Esophagus muscularis mucosa (tissue), 4 donors: ENCODE measurements at regions of chr4 and their contacts with region 1.

Region 1: DNA sequence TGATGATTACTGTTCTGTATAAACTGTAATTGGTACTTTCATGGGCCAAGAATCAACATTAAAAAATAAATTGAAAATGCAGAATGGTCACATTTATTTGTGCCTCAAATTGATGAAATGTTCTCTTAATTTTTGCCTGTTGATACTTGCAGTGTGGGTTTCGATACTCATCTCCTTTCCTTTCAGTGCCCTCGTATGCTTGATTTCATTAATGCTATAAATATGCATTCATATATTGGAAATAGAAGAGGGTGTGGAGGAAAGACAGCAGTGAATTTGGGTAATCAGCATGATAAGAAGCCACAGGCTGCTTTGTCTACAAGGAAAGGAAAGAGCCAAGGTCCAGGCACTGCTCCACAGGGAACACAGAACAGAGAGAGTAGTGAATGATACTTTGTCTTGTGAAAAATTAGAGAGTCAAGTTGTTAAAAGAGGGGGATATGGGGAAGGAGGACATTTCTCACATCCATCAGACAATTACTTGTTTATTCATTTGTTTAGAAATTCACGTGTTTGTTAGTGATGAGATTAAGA is 1.0 kb upstream of the DDX60 start:
- DNase-seq: no peak
- H3K4me3 ChIP-seq: peak overlapping the region; percentile 68 to 90 (median 77)
- H3K27ac ChIP-seq: peak overlapping the region; percentile 5 to 93 (median 90)
- H3K4me1 ChIP-seq: peaks cover 7 to 25% (median 18%) of the 10 kb centered on the region in 4 donors
- H3K27me3 ChIP-seq: no peaks in the 10 kb centered on the region
- CTCF ChIP-seq: no peak
- EP300 ChIP-seq: no peak
- POLR2A ChIP-seq: no peak

Region 2: GRCh38 chr4:168162604-168163003 is 156.9 kb before region 1 on chr4:
- intact Hi-C with region 1: no loop called
- DNase-seq: no peak
- H3K4me3 ChIP-seq: no peak overlapping the region
- H3K27ac ChIP-seq: no peak overlapping the region
- H3K4me1 ChIP-seq: no peaks in the 10 kb centered on the region
- H3K27me3 ChIP-seq: no peaks in the 10 kb centered on the region
- CTCF ChIP-seq: no peak
- EP300 ChIP-seq: no peak
- POLR2A ChIP-seq: no peak

Region 3: DNA sequence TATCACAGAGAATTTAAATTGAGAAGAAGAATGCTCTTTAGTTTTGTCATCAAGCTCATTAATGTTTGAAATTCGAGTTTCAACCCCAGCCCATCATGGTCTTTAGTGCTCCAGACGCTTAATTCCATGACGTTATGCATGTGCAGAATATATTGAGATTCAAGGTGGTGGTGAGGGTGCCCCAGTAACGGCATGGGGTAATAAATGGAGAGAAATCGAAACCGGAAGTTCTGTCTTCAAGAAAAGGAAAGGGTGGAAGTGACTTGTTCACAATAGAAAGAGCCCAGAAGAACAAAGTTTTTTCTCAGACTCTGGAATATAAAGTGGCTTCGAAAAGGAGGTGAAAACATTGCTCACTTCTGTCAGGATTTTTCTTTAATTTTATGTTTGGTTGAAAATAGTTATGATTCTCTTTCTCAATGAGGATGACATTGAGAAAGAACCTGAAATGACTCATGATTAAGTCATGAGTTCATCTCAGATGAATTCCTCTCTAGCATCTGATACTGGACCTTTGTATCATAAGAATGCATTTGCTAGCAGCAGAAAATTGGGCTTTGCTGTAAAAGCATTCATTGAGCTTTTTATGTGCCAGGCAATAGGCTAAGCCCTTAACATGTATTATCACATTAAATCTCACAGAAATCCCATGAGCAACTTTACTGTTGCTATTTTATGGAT is 161.5 kb after region 1 on chr4:
- intact Hi-C with region 1: loop called (anchors 10 kb)
- DNase-seq: no peak
- H3K4me3 ChIP-seq: peak overlapping the region; percentile 68 to 83 (median 76)
- H3K27ac ChIP-seq: peak overlapping the region; percentile 89 to 94 (median 92)
- H3K4me1 ChIP-seq: peaks cover 9 to 16% (median 14%) of the 10 kb centered on the region in 4 donors
- H3K27me3 ChIP-seq: no peaks in the 10 kb centered on the region
- CTCF ChIP-seq: no peak
- EP300 ChIP-seq: no peak
- POLR2A ChIP-seq: no peak

Region 4: GRCh38 chr4:168496834-168497233 is 177.3 kb after region 1 on chr4 and contains the start of gene PALLD:
- intact Hi-C with region 1: no loop called
- DNase-seq: peak; percentile 62
- H3K4me3 ChIP-seq: no peak within 1 kb of the TSS
- H3K27ac ChIP-seq: no peak within 1 kb of the TSS
- H3K4me1 ChIP-seq: no peaks in the 10 kb centered on the region
- H3K27me3 ChIP-seq: no peaks in the 10 kb centered on the region
- CTCF ChIP-seq: no peak
- EP300 ChIP-seq: no peak
- POLR2A ChIP-seq: no peak
- total RNA-seq, gene PALLD: 1,903 to 3,507 (median 2,130) TPM